PC-9 (cell line): ENCODE measurements at regions of chr11 and their contacts with region 1.

Region 1: DNA sequence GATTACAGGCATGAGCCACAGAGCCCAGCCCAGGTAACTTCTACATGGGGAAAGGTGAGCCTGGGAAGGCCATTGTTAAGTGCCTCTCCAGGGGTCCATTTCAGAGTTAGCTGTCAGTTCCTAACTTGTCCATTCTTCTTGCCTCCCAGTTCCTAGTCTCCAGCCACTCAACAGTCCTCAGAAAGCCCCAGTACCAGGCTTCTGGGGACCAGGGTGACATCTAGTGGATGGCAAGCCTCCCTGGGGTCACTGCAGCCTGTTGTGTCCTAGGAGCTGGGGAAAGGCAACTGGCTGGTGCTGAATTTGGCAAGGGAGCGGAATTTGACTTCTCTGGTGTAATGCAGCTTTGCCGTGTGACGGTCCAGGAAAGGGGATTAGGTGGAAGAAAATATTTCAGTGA is 2.1 kb downstream of the LGALS12 start:
- DNase-seq: peak; percentile 42 to 44
- H3K4me3 ChIP-seq: no peak overlapping the region
- H3K27ac ChIP-seq: no peak overlapping the region
- H3K4me1 ChIP-seq: no peaks in the 10 kb centered on the region
- H3K27me3 ChIP-seq: no peaks in the 10 kb centered on the region
- CTCF ChIP-seq: peak; percentile 52; the same call in 1 of the 2 replicates

Region 2: DNA sequence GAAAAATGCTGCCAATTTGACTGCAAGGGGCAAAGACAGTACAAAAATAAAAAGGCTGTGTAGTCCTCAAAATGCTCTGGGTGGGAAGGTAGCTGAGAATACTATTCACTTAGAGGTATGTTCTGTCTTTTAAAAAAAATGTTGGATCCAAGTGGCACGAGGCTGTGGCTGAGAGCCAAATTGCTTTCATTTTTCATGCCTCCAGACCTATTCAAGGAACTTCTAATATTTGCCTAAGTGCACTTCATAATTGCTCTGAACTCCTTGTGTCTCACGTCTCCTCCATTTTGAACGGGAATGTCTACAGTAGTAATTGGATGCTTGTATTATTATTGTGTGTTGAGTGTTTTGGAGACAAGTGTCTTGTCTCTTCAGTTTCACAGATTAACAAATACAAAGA is 245.5 kb before region 1 on chr11:
- CTCF ChIA-PET with region 1: no interaction called
- POLR2A ChIA-PET with region 1: no interaction called
- intact Hi-C with region 1: no loop called
- DNase-seq: no peak
- H3K4me3 ChIP-seq: no peak overlapping the region
- H3K27ac ChIP-seq: no peak overlapping the region
- H3K4me1 ChIP-seq: no peaks in the 10 kb centered on the region
- H3K27me3 ChIP-seq: peaks cover 22% of the 10 kb centered on the region
- CTCF ChIP-seq: no peak

Region 3: DNA sequence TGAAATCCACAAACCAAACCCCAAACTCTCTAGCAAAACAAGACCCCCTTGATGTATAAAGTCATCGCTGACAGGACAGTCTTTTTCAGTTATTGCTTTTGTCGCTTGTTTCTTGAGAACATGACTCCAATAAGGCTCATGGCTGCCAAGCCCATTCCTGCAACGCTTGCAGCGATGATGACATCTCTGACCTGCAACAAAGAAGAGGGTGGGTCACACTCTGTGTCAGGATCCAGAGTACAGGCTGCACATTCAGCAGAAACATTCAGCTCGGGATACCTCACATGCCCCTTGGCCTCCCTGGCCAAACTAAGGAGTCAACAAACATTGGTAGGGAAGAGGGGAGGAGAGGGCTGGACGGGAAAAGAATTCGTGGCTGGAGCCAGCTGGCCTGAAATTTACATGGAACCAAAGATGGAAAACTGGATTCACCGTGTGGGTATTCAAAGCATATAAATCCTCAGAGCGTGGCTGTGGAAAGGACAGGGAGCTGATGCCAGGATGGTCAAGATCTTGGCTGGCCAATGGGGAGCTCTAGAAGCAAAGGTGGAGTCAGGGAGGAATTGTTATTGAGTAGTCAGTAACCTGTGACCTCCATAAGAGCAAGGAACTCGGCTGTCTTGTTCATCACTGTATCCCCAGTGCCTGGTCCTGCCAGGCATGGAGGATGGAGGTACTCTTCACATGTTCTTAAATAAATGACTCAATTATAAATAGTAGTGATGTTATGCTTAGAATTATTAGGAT is 67.0 kb after region 1 on chr11:
- CTCF ChIA-PET with region 1: interaction called, 24 read pairs
- POLR2A ChIA-PET with region 1: no interaction called
- intact Hi-C with region 1: no loop called
- DNase-seq: no peak
- H3K4me3 ChIP-seq: no peak overlapping the region
- H3K27ac ChIP-seq: no peak overlapping the region
- H3K4me1 ChIP-seq: no peaks in the 10 kb centered on the region
- H3K27me3 ChIP-seq: no peaks in the 10 kb centered on the region
- CTCF ChIP-seq: no peak